ENCODE measurements at regions of chrX and their contacts with region 1.

Region 1: DNA sequence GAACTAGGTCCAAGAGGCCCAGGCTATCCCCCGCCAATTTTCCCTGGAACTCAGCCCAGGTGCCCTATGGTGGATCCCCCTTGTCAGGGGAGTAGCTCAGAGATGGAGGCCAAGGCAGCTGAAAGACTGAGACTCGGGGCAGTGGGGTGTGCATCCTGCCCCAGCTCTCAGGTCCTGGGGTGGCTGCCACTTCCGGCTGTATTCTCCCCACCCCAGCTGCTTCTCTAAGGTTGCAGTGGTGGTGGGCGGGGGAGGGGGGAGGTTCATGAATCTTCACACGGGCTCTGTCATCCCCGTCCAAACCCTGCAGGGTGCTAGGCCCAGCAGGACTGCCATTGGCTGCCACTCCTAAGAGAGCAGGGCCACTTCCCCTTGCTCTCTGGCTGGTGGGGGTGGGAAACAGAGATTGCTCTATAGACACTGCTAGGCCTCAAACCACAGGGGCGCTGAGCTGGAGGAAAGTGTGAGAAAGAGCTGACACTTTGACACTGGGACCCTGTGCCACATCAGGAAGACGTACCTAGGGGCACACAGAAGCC is 1.5 kb downstream of the SASH3 start:
- DNase-seq: peak; percentile 23 to 85 (median 77)
- ATAC-seq: peak; percentile 86
- H3K4me3 ChIP-seq: peak overlapping the region; percentile 93
- H3K4me3 Mint-ChIP-seq: peak overlapping the region; percentile 79 to 98 (median 92)
- H3K27ac ChIP-seq: peak overlapping the region; percentile 89
- H3K27ac Mint-ChIP-seq: peak overlapping the region; percentile 78 to 97 (median 93)
- H3K4me1 ChIP-seq: peaks cover 42 to 59% of the 10 kb centered on the region in 2 donors
- H3K4me1 Mint-ChIP-seq: peaks cover 25 to 76% (median 62%) of the 10 kb centered on the region in 7 donors
- H3K27me3 ChIP-seq: no peaks in the 10 kb centered on the region
- H3K27me3 Mint-ChIP-seq: no peaks in the 10 kb centered on the region

Region 2: GRCh38 chrX:129654419-129655165 is 126.6 kb before region 1 on chrX and contains the start of gene APLN:
- CTCF ChIA-PET with region 1: no interaction called
- POLR2A ChIA-PET with region 1: interaction called, 5 read pairs
- intact Hi-C with region 1: loop called in 1 of 2 experiments (anchors 5 kb)
- DNase-seq: peak in 2 of 9 donors; percentile 18 to 28
- ATAC-seq: peak; percentile 64
- H3K4me3 ChIP-seq: peak within 1 kb of the TSS; percentile 9
- H3K4me3 Mint-ChIP-seq: peak within 1 kb of the TSS; percentile 54 to 85 (median 68)
- H3K27ac ChIP-seq: no peak within 1 kb of the TSS
- H3K27ac Mint-ChIP-seq: peak within 1 kb of the TSS in 1 of 9 donors; percentile 9
- H3K4me1 ChIP-seq: peaks cover 3 to 7% of the 10 kb centered on the region in 2 donors
- H3K4me1 Mint-ChIP-seq: peaks cover 6 to 12% (median 9%) of the 10 kb centered on the region in 7 donors
- H3K27me3 ChIP-seq: no peaks in the 10 kb centered on the region
- H3K27me3 Mint-ChIP-seq: peaks cover 4 to 25% (median 5%) of the 10 kb centered on the region in 5 donors
- total RNA-seq, gene APLN: 0.10 TPM in 1 of 5 experiments, not detected in the others

Region 3: GRCh38 chrX:129737916-129738315 is 43.3 kb before region 1 on chrX:
- CTCF ChIA-PET with region 1: no interaction called
- POLR2A ChIA-PET with region 1: interaction called, 16 read pairs
- intact Hi-C with region 1: no loop called
- DNase-seq: no peak
- ATAC-seq: peak; percentile 63
- H3K4me3 ChIP-seq: no peak overlapping the region
- H3K4me3 Mint-ChIP-seq: peak overlapping the region in 1 of 10 donors; percentile 42
- H3K27ac ChIP-seq: no peak overlapping the region
- H3K27ac Mint-ChIP-seq: peak overlapping the region in 2 of 9 donors; percentile 53 to 72
- H3K4me1 ChIP-seq: peaks cover 8 to 17% of the 10 kb centered on the region in 2 donors
- H3K4me1 Mint-ChIP-seq: peaks cover 14 to 45% (median 29%) of the 10 kb centered on the region in 7 donors
- H3K27me3 ChIP-seq: no peaks in the 10 kb centered on the region
- H3K27me3 Mint-ChIP-seq: no peaks in the 10 kb centered on the region

Region 4: DNA sequence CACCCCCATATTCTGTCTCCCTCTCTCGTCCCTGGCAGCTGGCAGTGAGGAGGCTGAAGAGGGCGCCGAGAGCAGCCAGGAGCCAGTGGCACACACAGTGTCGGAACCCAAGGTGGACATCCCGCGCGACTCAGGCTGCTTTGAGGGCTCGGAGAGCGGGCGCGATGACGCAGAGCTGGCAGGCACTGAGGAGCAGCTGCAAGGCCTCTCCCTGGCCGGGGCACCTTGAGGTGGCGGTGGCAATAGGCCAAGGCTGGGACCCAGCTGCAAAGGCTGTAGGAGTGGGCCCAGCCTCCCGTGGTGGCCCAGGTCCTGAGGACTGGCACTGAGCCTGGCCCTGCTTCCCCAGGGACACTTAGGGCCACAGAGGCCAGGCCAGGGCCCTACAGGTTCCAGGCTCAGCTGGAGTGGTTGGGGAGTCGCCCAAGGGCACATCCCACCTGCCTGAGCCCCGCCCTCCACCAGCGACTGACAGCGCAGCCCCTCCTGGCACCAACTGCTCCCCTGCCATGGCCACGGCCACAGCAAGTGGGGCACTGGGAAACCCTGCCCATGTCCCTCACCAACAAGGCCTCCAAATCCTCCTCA is 12.5 kb after region 1 on chrX:
- CTCF ChIA-PET with region 1: interaction called, 3 read pairs
- POLR2A ChIA-PET with region 1: interaction called, 85 read pairs
- intact Hi-C with region 1: loop called in 1 of 2 experiments (anchors 2 kb)
- DNase-seq: no peak
- ATAC-seq: no peak
- H3K4me3 ChIP-seq: no peak overlapping the region
- H3K4me3 Mint-ChIP-seq: no peak overlapping the region
- H3K27ac ChIP-seq: no peak overlapping the region
- H3K27ac Mint-ChIP-seq: peak overlapping the region in 2 of 9 donors; percentile 31 to 38
- H3K4me1 ChIP-seq: no peaks in the 10 kb centered on the region
- H3K4me1 Mint-ChIP-seq: peaks cover 0 to 16% (median 8%) of the 10 kb centered on the region in 7 donors
- H3K27me3 ChIP-seq: no peaks in the 10 kb centered on the region
- H3K27me3 Mint-ChIP-seq: no peaks in the 10 kb centered on the region

Region 5: GRCh38 chrX:129843459-129844306 is 62.5 kb after region 1 on chrX and contains the start of gene ZDHHC9:
- CTCF ChIA-PET with region 1: no interaction called
- POLR2A ChIA-PET with region 1: no interaction called
- intact Hi-C with region 1: loop called in 1 of 2 experiments (anchors 5 kb)
- DNase-seq: peak; percentile 62 to 85 (median 81)
- ATAC-seq: peak; percentile 98
- H3K4me3 ChIP-seq: peak within 1 kb of the TSS; percentile 95
- H3K4me3 Mint-ChIP-seq: peak within 1 kb of the TSS; percentile 86 to 98 (median 92)
- H3K27ac ChIP-seq: peak within 1 kb of the TSS; percentile 76
- H3K27ac Mint-ChIP-seq: peak within 1 kb of the TSS; percentile 68 to 91 (median 80)
- H3K4me1 ChIP-seq: peaks cover 5 to 15% of the 10 kb centered on the region in 2 donors
- H3K4me1 Mint-ChIP-seq: peaks cover 4 to 39% (median 28%) of the 10 kb centered on the region in 7 donors
- H3K27me3 ChIP-seq: no peaks in the 10 kb centered on the region
- H3K27me3 Mint-ChIP-seq: no peaks in the 10 kb centered on the region
- total RNA-seq, gene ZDHHC9: 4.9 to 9.1 (median 7.1) TPM

Region 6: DNA sequence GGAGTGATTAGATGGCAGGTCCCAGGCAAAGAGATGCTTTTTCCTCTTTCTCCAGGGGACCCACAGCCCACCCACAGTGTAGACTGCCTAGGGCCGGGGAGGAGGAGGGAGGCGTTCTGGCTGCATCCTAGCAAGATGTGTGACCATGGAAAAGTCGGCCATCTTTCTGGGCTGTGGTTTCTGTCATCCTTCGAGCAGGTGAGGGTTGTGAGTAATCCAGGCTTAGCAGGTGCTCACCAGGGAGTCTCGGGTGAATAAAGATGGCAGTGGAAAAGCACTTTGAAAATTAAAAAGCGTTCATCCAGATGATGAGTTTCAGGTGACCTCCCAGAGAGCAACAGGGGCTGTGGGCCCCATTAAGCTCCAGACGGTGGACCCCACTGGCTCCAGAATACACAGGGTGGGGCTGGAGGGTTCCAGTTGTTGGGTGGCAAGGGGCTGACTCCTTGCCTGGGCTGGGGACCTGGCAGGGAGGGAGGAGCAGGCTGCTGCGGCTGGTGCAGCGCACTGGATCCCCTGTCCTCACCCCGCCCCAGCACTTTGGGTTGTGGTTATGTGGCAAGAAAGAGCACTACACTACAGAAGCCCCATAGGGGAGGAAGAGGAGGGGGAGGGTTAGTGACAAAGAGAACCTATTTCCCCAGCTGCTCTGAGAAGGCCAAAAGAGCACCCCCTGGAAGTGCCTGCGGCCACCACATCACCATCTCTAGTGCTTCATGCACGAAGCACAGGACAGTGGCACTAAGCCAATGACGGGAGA is 305.4 kb after region 1 on chrX:
- CTCF ChIA-PET with region 1: no interaction called
- POLR2A ChIA-PET with region 1: no interaction called
- intact Hi-C with region 1: loop called in 1 of 2 experiments (anchors 5 kb)
- DNase-seq: peak in 8 of 9 donors; percentile 64 to 79 (median 74)
- ATAC-seq: peak; percentile 74
- H3K4me3 ChIP-seq: peak overlapping the region; percentile 67
- H3K4me3 Mint-ChIP-seq: peak overlapping the region; percentile 86 to 93 (median 89)
- H3K27ac ChIP-seq: peak overlapping the region; percentile 66
- H3K27ac Mint-ChIP-seq: peak overlapping the region; percentile 76 to 96 (median 91)
- H3K4me1 ChIP-seq: peaks cover 22 to 35% of the 10 kb centered on the region in 2 donors
- H3K4me1 Mint-ChIP-seq: peaks cover 15 to 71% (median 60%) of the 10 kb centered on the region in 7 donors
- H3K27me3 ChIP-seq: no peaks in the 10 kb centered on the region
- H3K27me3 Mint-ChIP-seq: no peaks in the 10 kb centered on the region

Region 7: DNA sequence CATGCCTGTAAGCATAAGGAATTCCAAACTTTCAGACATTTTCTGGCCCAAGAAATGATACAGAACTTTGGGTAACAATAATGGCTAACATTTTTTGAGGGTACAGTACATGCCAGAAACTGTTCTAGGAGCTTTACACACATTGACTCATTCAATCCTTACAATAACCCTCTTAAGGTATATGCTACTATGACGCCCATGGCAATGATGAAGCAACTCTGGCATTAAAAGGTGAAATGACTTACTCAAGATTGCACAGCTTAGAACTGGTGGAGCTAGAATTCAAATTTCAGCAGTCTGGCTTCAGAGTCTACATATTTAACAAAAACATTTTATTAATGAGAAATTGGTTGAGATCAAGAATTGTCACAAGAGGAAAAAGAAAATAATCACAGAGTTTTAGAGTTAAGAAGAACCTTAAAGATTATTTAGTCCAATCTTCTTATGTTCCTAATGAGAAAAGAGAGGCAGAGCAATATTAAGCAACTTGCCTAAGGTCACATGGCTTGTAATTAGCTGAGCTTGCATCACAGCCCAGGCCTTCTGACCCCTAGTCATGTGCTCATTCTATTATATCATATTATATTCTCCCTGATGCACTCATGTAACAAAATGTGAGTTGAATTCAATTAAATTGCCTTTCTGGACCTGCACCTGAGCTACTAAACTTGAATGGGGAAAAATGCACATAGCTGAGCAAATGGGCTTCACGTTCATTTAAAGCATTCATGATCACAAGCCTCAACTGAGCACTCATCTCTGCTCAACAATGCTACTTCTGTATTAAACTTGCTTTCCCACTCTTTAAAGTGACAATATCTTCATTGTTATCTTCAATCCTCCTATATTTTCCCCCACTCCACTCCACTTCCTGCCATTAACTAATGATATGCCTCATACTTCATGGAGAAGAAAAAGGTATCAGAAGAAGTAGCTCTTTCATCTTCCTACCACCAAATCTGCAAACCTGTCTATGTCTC is 1048.6 kb after region 1 on chrX:
- CTCF ChIA-PET with region 1: no interaction called
- POLR2A ChIA-PET with region 1: no interaction called
- intact Hi-C with region 1: no loop called
- DNase-seq: no peak
- ATAC-seq: no peak
- H3K4me3 ChIP-seq: no peak overlapping the region
- H3K4me3 Mint-ChIP-seq: no peak overlapping the region
- H3K27ac ChIP-seq: no peak overlapping the region
- H3K27ac Mint-ChIP-seq: no peak overlapping the region
- H3K4me1 ChIP-seq: no peaks in the 10 kb centered on the region
- H3K4me1 Mint-ChIP-seq: peaks cover 4 to 29% (median 14%) of the 10 kb centered on the region in 7 donors
- H3K27me3 ChIP-seq: no peaks in the 10 kb centered on the region
- H3K27me3 Mint-ChIP-seq: no peaks in the 10 kb centered on the region